Naive thymus-derived CD4-positive, alpha-beta T cell (primary cell): ENCODE measurements at regions of chr10 and their contacts with region 1.

Region 1: GRCh38 chr10:72088889-72089575 is 681 bp upstream of the SPOCK2 start:
- DNase-seq: peak in 5 of 9 donors; percentile 37 to 79 (median 78)
- ATAC-seq: peak; percentile 54
- H3K4me3 ChIP-seq: peak overlapping the region; percentile 98
- H3K4me3 Mint-ChIP-seq: peak overlapping the region; percentile 88 to 100 (median 98)
- H3K27ac ChIP-seq: peak overlapping the region; percentile 99
- H3K27ac Mint-ChIP-seq: peak overlapping the region; percentile 96 to 100 (median 99)
- H3K4me1 ChIP-seq: peaks cover 39 to 49% of the 10 kb centered on the region in 2 donors
- H3K4me1 Mint-ChIP-seq: peaks cover 24 to 60% (median 50%) of the 10 kb centered on the region in 7 donors
- H3K27me3 ChIP-seq: no peaks in the 10 kb centered on the region
- H3K27me3 Mint-ChIP-seq: no peaks in the 10 kb centered on the region

Region 2: DNA sequence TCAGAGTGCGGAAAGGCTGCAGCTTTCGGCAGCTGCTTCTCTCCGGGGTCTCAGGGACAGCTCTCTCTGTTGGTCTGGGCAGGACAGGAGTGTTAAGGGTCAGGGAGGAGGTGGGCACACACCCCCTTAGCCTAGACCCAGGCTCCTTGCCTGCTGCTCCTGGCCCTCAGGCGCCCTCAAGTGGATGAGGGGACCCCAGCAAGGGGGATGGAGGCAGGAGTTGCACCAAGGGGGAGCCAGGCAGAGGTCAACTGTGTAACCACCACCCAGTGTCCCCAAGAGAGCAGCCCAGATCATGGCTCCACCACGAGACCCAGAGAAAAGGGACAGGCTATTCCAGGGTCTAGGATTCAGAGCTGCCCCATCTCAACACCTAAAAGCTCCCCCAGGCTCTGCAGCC is 27.5 kb before region 1 on chr10:
- CTCF ChIA-PET with region 1: interaction called, 3 read pairs
- POLR2A ChIA-PET with region 1: interaction called, 6 read pairs
- intact Hi-C with region 1: loop called in 1 of 2 experiments (anchors 2 kb)
- DNase-seq: no peak
- ATAC-seq: peak; percentile 22
- H3K4me3 ChIP-seq: no peak overlapping the region
- H3K4me3 Mint-ChIP-seq: peak overlapping the region in 2 of 10 donors; percentile 32 to 66
- H3K27ac ChIP-seq: no peak overlapping the region
- H3K27ac Mint-ChIP-seq: peak overlapping the region; percentile 34 to 91 (median 80)
- H3K4me1 ChIP-seq: no peaks in the 10 kb centered on the region
- H3K4me1 Mint-ChIP-seq: peaks cover 0 to 37% (median 24%) of the 10 kb centered on the region in 7 donors
- H3K27me3 ChIP-seq: no peaks in the 10 kb centered on the region
- H3K27me3 Mint-ChIP-seq: no peaks in the 10 kb centered on the region

Region 3: DNA sequence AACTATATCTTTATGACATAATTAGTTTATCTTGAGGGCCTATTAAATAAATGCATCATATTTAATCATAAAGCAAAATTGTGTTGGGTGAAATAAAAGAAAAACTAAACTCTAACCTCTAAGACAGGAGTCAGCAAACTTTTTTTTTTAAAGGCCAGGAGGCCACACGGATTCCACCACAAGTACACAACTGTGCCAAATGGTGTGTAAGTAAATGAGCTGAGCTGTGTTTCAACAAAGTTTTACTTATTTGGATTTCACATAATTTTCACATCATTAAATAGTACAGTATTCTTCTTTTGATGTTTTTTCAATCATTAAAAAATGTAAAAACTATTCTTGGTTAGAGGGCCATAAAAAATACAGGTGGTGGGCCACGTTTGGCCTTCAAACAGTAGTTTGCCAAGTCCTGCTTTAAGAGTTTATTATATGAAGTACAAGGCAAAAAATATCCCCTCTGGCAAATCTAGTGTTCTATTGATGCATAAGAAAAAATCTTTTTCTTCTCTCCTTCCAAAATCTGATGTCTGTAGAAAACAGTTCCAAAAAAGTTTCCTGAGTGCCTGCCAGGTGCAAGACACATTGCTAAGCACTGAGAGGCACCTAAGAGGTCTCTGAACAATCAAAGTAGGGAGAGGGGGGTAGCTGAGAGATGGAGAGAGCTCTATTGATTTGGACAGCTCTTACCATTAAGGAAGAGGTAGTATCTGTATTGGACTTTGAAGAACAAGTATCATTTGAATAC is 25.8 kb after region 1 on chr10:
- CTCF ChIA-PET with region 1: interaction called, 3 read pairs
- POLR2A ChIA-PET with region 1: interaction called, 19 read pairs
- intact Hi-C with region 1: no loop called
- DNase-seq: no peak
- ATAC-seq: no peak
- H3K4me3 ChIP-seq: no peak overlapping the region
- H3K4me3 Mint-ChIP-seq: peak overlapping the region in 1 of 10 donors; percentile 16
- H3K27ac ChIP-seq: no peak overlapping the region
- H3K27ac Mint-ChIP-seq: peak overlapping the region in 4 of 9 donors; percentile 13 to 76 (median 35)
- H3K4me1 ChIP-seq: peaks cover 0 to 13% of the 10 kb centered on the region in 2 donors
- H3K4me1 Mint-ChIP-seq: peaks cover 17 to 71% (median 53%) of the 10 kb centered on the region in 7 donors
- H3K27me3 ChIP-seq: no peaks in the 10 kb centered on the region
- H3K27me3 Mint-ChIP-seq: no peaks in the 10 kb centered on the region

Region 4: DNA sequence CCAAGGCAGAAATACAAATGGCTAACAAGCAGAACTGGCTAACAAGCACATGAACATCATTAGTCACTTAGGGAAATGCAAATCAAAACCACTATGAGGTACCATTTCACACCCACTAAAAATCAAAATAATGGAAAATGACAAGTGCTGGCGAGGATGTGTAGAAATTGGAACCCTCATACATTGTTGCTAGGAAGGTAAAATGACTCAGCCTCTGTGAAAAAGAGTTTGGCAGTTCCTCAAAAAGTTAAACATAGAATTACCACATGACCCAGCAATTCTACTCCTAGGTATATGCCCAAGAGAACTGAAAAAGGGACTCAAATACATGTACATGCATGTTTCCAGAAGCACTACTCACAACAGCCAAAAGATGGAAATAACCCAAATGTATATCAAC is 73.9 kb after region 1 on chr10:
- CTCF ChIA-PET with region 1: interaction called, 4 read pairs
- POLR2A ChIA-PET with region 1: interaction called, 3 read pairs
- intact Hi-C with region 1: loop called in 1 of 2 experiments (anchors 2 kb)
- DNase-seq: no peak
- ATAC-seq: peak; percentile 40
- H3K4me3 ChIP-seq: no peak overlapping the region
- H3K4me3 Mint-ChIP-seq: no peak overlapping the region
- H3K27ac ChIP-seq: no peak overlapping the region
- H3K27ac Mint-ChIP-seq: no peak overlapping the region
- H3K4me1 ChIP-seq: peaks cover 0 to 4% of the 10 kb centered on the region in 2 donors
- H3K4me1 Mint-ChIP-seq: peaks cover 0 to 16% (median 13%) of the 10 kb centered on the region in 7 donors
- H3K27me3 ChIP-seq: no peaks in the 10 kb centered on the region
- H3K27me3 Mint-ChIP-seq: no peaks in the 10 kb centered on the region

Region 5: DNA sequence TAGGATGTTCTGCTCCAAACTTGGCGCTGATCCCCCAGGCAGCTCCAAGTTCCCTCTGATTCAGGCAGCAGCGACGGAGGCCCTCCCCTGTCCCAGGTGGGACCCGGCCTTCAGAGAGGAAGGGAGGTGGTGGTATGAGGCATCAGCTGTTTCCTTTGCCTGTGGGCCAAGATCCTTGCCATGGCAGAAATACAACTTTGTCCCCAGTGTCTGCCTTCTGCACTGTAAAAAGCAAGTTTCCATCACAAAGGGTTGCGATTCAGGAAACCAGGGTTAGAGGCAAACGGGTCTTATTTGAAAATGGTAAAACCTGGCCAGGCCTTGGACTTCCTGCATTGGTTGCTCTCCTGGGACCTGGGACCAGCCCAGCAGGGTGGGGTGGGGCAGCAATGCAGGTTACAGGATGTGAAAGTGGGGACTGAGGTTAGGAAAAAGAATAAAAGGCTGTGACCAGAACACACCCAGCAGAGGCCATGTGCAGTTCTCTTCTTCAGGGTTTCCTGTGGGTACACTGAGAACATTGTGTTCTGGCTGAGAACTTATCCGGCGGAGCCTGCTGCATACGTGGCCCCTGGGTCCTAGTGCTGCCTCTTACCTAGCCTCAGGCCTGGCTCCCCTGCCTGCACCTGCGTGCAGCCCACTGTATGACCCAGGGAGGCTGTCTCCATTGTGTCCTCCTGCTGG is 159.6 kb after region 1 on chr10:
- CTCF ChIA-PET with region 1: no interaction called
- POLR2A ChIA-PET with region 1: interaction called, 5 read pairs
- intact Hi-C with region 1: loop called in 1 of 2 experiments (anchors 1 kb)
- DNase-seq: peak; percentile 34 to 92 (median 83)
- ATAC-seq: peak; percentile 95
- H3K4me3 ChIP-seq: peak overlapping the region; percentile 59
- H3K4me3 Mint-ChIP-seq: peak overlapping the region; percentile 80 to 98 (median 84)
- H3K27ac ChIP-seq: peak overlapping the region; percentile 68
- H3K27ac Mint-ChIP-seq: peak overlapping the region; percentile 87 to 99 (median 96)
- H3K4me1 ChIP-seq: peaks cover 62 to 89% of the 10 kb centered on the region in 2 donors
- H3K4me1 Mint-ChIP-seq: peaks cover 63 to 89% (median 83%) of the 10 kb centered on the region in 7 donors
- H3K27me3 ChIP-seq: no peaks in the 10 kb centered on the region
- H3K27me3 Mint-ChIP-seq: no peaks in the 10 kb centered on the region

Region 6: DNA sequence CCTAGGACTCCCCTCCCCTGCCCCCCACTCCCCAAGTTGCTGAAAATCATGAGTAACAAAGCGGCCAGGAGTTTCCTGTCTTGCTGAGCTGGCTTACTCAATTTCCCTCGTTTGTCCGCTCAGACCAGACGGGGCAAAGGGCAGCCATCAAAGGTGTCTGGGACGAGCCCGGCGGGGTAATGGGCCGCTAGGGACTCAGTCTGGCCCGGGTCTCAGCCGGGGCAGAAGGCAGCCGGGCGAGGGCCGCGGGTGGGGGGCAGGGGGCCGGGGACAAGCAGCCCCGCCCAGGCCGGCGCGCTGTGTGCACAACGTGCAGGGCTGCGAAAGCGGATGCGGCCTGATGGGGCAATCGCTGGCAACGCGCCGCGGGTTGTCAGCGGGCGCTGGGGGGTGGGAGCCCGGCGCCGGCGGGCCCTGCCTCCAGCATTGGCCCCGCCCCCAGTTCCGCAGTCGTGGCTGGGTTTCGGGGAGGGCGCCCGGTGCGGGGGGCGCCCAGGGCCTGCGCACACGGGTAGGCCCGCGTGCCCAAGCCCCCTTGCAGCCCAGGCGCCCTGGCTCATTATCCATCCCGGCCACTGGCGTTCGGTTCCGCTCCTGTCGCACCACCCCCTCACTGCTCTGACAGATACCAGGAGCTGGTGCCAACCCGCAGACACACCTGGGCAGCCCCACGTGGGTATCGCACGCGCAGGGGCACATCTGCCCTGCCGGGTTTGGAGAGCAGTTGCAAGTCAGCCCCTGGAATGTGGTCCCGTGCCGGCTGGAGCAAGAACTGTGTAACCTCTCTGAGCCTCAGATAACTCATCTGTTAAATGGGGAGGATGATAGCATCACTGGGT is 230.6 kb after region 1 on chr10:
- CTCF ChIA-PET with region 1: interaction called, 5 read pairs
- POLR2A ChIA-PET with region 1: interaction called, 10 read pairs
- intact Hi-C with region 1: no loop called
- DNase-seq: peak; percentile 82 to 90 (median 88)
- ATAC-seq: peak; percentile 85
- H3K4me3 ChIP-seq: peak overlapping the region; percentile 60
- H3K4me3 Mint-ChIP-seq: peak overlapping the region; percentile 69 to 89 (median 82)
- H3K27ac ChIP-seq: peak overlapping the region; percentile 94
- H3K27ac Mint-ChIP-seq: peak overlapping the region; percentile 90 to 98 (median 97)
- H3K4me1 ChIP-seq: peaks cover 61 to 90% of the 10 kb centered on the region in 2 donors
- H3K4me1 Mint-ChIP-seq: peaks cover 58 to 90% (median 83%) of the 10 kb centered on the region in 7 donors
- H3K27me3 ChIP-seq: no peaks in the 10 kb centered on the region
- H3K27me3 Mint-ChIP-seq: no peaks in the 10 kb centered on the region

Region 7: DNA sequence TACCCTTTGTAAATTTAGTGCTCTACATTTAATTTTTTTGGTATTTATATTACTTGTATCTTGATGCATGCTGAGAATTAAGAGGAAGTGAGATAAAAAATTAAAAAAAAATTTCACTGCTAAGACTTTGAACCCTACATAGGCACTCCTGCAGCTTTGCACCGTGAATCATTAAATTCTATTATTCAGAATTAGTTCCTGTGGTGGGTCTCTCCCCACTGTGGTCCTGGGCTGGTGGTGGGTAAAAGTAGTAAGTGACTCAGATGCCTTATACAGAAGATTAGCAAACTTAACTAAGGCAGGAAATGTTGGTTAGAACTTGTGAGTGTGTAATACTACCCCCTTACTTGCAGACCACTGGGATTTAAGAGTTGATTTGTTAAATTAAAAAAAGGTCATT is 1989.0 kb after region 1 on chr10:
- CTCF ChIA-PET with region 1: no interaction called
- POLR2A ChIA-PET with region 1: no interaction called
- intact Hi-C with region 1: no loop called
- DNase-seq: no peak
- ATAC-seq: peak; percentile 44
- H3K4me3 ChIP-seq: no peak overlapping the region
- H3K4me3 Mint-ChIP-seq: no peak overlapping the region
- H3K27ac ChIP-seq: no peak overlapping the region
- H3K27ac Mint-ChIP-seq: no peak overlapping the region
- H3K4me1 ChIP-seq: peaks cover 0 to 15% of the 10 kb centered on the region in 2 donors
- H3K4me1 Mint-ChIP-seq: peaks cover 0 to 34% (median 6%) of the 10 kb centered on the region in 7 donors
- H3K27me3 ChIP-seq: no peaks in the 10 kb centered on the region
- H3K27me3 Mint-ChIP-seq: no peaks in the 10 kb centered on the region